ENCODE measurements at regions of chr17 and their contacts with region 1.

Region 1: DNA sequence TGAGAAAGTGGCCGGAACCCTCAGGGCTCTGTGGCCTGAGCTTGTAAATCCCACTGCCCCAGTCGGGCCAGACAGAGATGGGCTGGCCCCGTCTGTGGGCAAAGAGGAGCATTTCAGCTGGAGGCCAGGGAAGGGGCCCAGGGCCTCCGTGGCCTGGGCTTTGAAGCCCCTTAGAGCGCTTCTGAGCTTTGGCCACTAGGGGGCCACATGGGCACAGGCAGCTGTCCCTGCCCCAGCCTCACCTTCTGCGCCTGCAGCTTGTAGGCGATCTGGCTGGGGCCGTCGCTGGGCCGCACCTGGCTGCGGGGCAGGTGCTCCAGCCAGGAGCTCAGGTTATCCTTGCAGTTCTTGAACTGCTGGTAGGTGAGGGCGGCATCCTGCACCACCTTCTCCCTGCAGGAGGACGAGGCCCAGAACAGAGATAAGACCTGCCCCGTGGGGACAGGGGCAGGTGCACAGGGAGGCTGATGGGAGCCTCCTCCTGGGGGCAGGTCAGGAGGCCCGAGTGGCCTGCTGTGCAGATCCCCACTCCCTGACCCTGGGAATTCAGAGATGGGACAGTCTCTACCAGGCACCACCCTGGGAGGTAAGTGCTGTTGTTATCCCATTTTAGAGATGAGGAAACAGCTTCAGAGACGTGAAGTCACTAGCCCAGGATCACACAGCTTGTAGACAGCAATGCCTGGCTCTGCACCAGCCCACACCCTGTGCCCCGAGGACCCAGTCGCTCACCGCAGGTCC is 12.8 kb downstream of the EVPL start:
- DNase-seq: peak; percentile 66 to 85 (median 71)
- H3K4me3 ChIP-seq: no peak overlapping the region
- H3K4me3 Mint-ChIP-seq: peak overlapping the region in 1 of 7 donors; percentile 32
- H3K27ac ChIP-seq: no peak overlapping the region
- H3K27ac Mint-ChIP-seq: peak overlapping the region in 1 of 8 donors; percentile 80
- H3K4me1 ChIP-seq: peaks cover 4% of the 10 kb centered on the region
- H3K4me1 Mint-ChIP-seq: peaks cover 5 to 6% (median 5%) of the 10 kb centered on the region in 3 donors
- H3K27me3 ChIP-seq: no peaks in the 10 kb centered on the region
- H3K27me3 Mint-ChIP-seq: peaks cover 0 to 5% of the 10 kb centered on the region in 2 donors

Region 2: GRCh38 chr17:76000016-76000754 is 14.2 kb before region 1 on chr17:
- CTCF ChIA-PET with region 1: interaction called, 16 read pairs
- POLR2A ChIA-PET with region 1: no interaction called
- DNase-seq: peak; percentile 36 to 67 (median 51)
- H3K4me3 ChIP-seq: no peak overlapping the region
- H3K4me3 Mint-ChIP-seq: no peak overlapping the region
- H3K27ac ChIP-seq: no peak overlapping the region
- H3K27ac Mint-ChIP-seq: no peak overlapping the region
- H3K4me1 ChIP-seq: peaks cover 12% of the 10 kb centered on the region
- H3K4me1 Mint-ChIP-seq: peaks cover 11 to 14% (median 12%) of the 10 kb centered on the region in 3 donors
- H3K27me3 ChIP-seq: no peaks in the 10 kb centered on the region
- H3K27me3 Mint-ChIP-seq: no peaks in the 10 kb centered on the region

Region 3: GRCh38 chr17:76036497-76037261 is 22.3 kb after region 1 on chr17:
- CTCF ChIA-PET with region 1: interaction called, 11 read pairs
- POLR2A ChIA-PET with region 1: no interaction called
- DNase-seq: no peak
- H3K4me3 ChIP-seq: no peak overlapping the region
- H3K4me3 Mint-ChIP-seq: no peak overlapping the region
- H3K27ac ChIP-seq: no peak overlapping the region
- H3K27ac Mint-ChIP-seq: peak overlapping the region in 4 of 8 donors; percentile 37 to 54 (median 44)
- H3K4me1 ChIP-seq: no peaks in the 10 kb centered on the region
- H3K4me1 Mint-ChIP-seq: peaks cover 0 to 7% (median 3%) of the 10 kb centered on the region in 3 donors
- H3K27me3 ChIP-seq: no peaks in the 10 kb centered on the region
- H3K27me3 Mint-ChIP-seq: peaks cover 0 to 1% of the 10 kb centered on the region in 2 donors

Region 4: DNA sequence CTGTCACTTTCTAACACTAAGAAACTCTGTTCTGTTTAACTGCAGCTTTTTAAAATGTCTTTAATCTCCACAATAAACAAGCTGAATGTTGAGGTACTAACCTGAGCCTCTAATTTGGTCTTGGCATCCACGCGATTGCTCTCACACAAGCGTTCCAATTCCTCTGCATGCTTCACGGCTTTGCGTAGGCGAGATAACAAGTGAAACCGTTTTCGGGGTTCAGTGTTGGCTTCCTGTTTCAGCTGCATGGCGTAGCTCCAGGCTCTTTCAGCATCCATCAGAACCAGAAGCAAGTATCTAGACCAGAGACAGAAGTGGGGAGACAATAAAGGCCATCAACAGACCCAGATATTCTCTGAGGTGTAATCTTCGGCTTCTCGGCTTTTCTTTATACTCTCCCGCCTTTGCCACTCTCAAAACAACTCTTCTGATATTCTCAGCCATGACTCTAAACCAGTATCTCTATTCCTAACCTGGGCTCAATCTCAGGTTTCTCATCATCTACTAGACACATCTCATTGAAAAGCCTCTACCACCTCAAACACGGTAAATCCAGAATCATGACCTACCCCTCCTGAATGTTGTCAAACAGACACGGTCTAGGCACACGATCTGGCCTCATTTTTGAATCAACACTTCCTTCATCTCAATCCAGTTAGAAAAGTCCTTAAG is 49.7 kb after region 1 on chr17:
- CTCF ChIA-PET with region 1: interaction called, 14 read pairs
- POLR2A ChIA-PET with region 1: no interaction called
- DNase-seq: peak in 1 of 5 donors; percentile 31
- H3K4me3 ChIP-seq: no peak overlapping the region
- H3K4me3 Mint-ChIP-seq: peak overlapping the region; percentile 10 to 76 (median 64)
- H3K27ac ChIP-seq: no peak overlapping the region
- H3K27ac Mint-ChIP-seq: peak overlapping the region; percentile 73 to 97 (median 90)
- H3K4me1 ChIP-seq: no peaks in the 10 kb centered on the region
- H3K4me1 Mint-ChIP-seq: peaks cover 13 to 32% (median 24%) of the 10 kb centered on the region in 3 donors
- H3K27me3 ChIP-seq: no peaks in the 10 kb centered on the region
- H3K27me3 Mint-ChIP-seq: no peaks in the 10 kb centered on the region

Region 5: GRCh38 chr17:76278952-76279741 is 264.8 kb after region 1 on chr17:
- CTCF ChIA-PET with region 1: interaction called, 12 read pairs
- POLR2A ChIA-PET with region 1: no interaction called
- DNase-seq: peak; percentile 74 to 90 (median 80)
- H3K4me3 ChIP-seq: no peak overlapping the region
- H3K4me3 Mint-ChIP-seq: no peak overlapping the region
- H3K27ac ChIP-seq: no peak overlapping the region
- H3K27ac Mint-ChIP-seq: peak overlapping the region in 2 of 8 donors; percentile 26 to 83
- H3K4me1 ChIP-seq: peaks cover 14% of the 10 kb centered on the region
- H3K4me1 Mint-ChIP-seq: peaks cover 0 to 17% (median 7%) of the 10 kb centered on the region in 3 donors
- H3K27me3 ChIP-seq: no peaks in the 10 kb centered on the region
- H3K27me3 Mint-ChIP-seq: peaks cover 0 to 1% of the 10 kb centered on the region in 2 donors

Region 6: DNA sequence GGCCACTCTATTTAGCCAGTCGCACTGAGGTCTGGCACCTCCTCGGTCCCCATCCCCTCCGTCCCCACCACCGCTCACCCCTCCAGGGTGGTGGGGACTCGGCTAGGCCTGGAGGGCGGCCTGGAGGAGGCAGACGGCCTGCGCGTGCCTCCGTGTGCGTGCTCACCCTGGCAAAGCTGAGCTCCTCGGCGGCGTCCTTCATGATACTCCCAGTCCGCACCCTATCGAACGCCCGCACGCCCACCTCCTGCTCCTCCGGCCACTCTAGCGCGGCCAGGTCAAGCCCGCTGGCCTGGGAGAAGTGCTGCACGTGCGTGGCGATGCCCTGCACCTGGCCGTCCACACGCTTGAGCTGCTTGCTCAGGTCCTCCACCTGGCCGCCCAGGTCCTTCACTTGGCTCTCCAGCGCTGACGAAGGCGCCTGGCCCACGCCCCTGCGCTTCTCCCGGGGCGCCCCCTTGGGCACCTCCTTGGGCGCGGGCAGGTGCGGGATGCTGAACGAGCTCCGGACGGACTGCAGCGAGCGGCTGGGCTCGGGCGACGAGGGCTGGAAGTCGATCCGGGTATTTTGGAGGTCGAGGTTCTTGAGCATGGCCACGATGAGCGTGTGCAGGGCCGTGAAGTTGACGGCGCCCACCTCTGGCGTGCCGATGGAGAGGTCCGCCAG is 293.1 kb after region 1 on chr17:
- CTCF ChIA-PET with region 1: interaction called, 13 read pairs
- POLR2A ChIA-PET with region 1: no interaction called
- DNase-seq: no peak
- H3K4me3 ChIP-seq: no peak overlapping the region
- H3K4me3 Mint-ChIP-seq: no peak overlapping the region
- H3K27ac ChIP-seq: no peak overlapping the region
- H3K27ac Mint-ChIP-seq: no peak overlapping the region
- H3K4me1 ChIP-seq: no peaks in the 10 kb centered on the region
- H3K4me1 Mint-ChIP-seq: peaks cover 0 to 4% (median 2%) of the 10 kb centered on the region in 3 donors
- H3K27me3 ChIP-seq: no peaks in the 10 kb centered on the region
- H3K27me3 Mint-ChIP-seq: peaks cover 0 to 1% of the 10 kb centered on the region in 2 donors